A673 (cell line): ENCODE measurements at regions of chr9 and their contacts with region 1.

Region 1: GRCh38 chr9:138112791-138113600 is 235.4 kb downstream of the CACNA1B start:
- DNase-seq: peak; percentile 18
- H3K4me3 ChIP-seq: no peak overlapping the region
- H3K27ac ChIP-seq: no peak overlapping the region
- H3K4me1 ChIP-seq: no peaks in the 10 kb centered on the region
- H3K27me3 ChIP-seq: no peaks in the 10 kb centered on the region
- CTCF ChIP-seq: no peak

Region 2: DNA sequence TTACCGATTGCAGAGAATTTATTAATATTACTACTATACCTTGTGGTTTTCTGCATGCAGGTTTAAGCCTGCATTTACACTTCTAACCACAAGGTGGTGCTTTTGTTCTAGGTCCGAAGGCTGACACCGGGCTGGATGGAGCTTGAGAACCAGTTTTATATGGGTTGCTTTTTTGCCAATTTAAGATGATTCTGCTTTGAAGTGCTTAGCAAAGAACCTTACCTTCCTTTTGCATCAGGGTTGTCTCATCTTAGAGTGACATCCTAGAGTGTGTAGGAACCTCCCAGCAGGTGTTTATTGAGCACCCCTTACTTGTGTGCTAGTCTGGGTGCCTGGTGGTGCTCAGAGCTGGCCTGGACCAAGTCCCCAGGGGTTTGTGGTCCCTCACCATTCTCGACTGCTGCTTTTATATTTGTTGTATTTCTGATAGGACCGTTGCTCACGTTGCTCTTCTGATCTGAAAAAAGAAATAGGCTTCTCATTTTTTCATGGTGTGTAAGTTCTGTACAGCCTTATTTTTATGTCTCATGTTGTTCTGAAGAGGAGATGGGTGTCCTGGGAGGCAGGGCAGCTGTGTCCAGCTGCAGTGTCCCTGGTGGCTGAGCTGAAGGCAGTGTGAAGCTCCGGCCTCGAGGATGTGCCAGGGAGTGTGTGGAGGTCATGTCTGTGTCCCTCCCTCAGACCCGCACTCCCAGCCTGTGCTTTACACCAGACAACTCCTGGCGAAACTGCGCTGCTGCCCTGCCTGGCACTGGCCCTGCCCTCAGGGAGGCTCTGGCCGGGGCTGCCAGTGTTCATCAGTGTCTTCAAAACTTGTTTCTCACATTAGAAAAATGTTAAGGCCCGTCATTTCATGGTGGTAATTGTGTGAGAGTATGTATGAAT is 439.8 kb before region 1 on chr9:
- CTCF ChIA-PET with region 1: interaction called, 3 read pairs
- POLR2A ChIA-PET with region 1: no interaction called
- intact Hi-C with region 1: loop called (anchors 5 kb)
- DNase-seq: peak; percentile 78
- H3K4me3 ChIP-seq: no peak overlapping the region
- H3K27ac ChIP-seq: no peak overlapping the region
- H3K4me1 ChIP-seq: peaks cover 20% of the 10 kb centered on the region
- H3K27me3 ChIP-seq: no peaks in the 10 kb centered on the region
- CTCF ChIP-seq: peak; percentile 87